AG04449 (cell line): ENCODE measurements at regions of chr5 and their contacts with region 1.

Region 1: GRCh38 chr5:36177715-36178523 is 26.0 kb downstream of the SKP2 start:
- DNase-seq: no peak
- H3K4me3 ChIP-seq: no peak overlapping the region
- CTCF ChIP-seq: peak; percentile 33

Region 2: GRCh38 chr5:34743878-34744277 is 1434.0 kb before region 1 on chr5:
- CTCF ChIA-PET with region 1: no interaction called
- POLR2A ChIA-PET with region 1: no interaction called
- DNase-seq: peak; percentile 99
- H3K4me3 ChIP-seq: no peak overlapping the region
- CTCF ChIP-seq: no peak

Region 3: GRCh38 chr5:36158144-36158543 is 19.8 kb before region 1 on chr5:
- CTCF ChIA-PET with region 1: interaction called, 16 read pairs
- POLR2A ChIA-PET with region 1: no interaction called
- DNase-seq: no peak
- H3K4me3 ChIP-seq: no peak overlapping the region
- CTCF ChIP-seq: no peak

Region 4: GRCh38 chr5:36241631-36242533 is 64.0 kb after region 1 on chr5 and contains the start of gene NADK2:
- CTCF ChIA-PET with region 1: interaction called, 17 read pairs
- POLR2A ChIA-PET with region 1: no interaction called
- DNase-seq: peak; percentile 71
- H3K4me3 ChIP-seq: peak within 1 kb of the TSS; percentile 78
- CTCF ChIP-seq: peak; percentile 68

Region 5: GRCh38 chr5:36397901-36398536 is 220.1 kb after region 1 on chr5:
- CTCF ChIA-PET with region 1: interaction called, 27 read pairs
- POLR2A ChIA-PET with region 1: no interaction called
- DNase-seq: no peak
- H3K4me3 ChIP-seq: no peak overlapping the region
- CTCF ChIP-seq: peak; percentile 40

Region 6: DNA sequence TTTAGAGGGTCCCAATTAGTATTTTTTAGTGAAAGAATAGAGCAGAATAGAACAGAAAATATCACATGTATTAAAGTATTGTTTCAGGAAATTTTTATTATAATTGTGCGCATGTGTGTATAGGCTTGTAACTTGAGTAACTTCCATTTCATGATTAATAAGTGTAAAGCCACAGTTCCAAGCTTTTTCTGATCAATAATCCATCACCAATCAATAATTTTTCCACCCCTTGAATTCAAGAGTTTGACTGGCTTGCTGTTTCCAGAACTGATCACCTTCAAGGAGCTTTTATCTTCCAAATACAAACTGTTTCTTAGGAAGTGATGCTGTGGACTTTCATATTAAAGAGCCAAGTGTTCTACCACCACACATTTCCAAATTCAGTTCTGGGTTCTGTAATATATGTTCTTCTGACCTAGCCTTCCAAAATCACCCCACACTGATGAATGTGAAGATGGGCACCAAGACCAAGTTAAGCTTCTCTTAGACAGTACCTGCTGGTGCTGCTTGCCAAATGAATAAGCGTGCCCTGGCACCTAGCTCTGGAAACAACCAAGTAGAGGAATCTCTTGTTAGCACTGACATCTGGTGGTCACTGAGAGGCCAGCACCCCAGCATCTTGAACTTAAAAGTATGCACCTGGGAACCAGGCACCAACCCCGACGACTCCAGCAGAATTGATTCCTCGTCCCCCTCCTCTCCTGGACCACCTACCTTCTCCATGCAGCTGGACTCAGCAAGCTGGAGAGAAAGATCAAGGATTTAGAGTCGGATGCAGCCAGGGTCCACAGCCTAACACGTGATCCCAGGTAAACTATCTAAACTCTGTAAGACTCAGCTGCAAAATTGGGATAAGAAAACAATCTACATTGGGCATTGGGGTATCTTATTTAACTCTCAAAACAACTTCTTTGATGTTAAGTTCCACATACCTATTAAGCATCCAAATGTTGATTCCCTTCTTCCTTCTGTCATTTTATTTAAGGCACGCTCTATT is 518.1 kb after region 1 on chr5:
- CTCF ChIA-PET with region 1: interaction called, 19 read pairs
- POLR2A ChIA-PET with region 1: no interaction called
- DNase-seq: no peak
- H3K4me3 ChIP-seq: no peak overlapping the region
- CTCF ChIP-seq: peak; percentile 70